ENCODE measurements at regions of chr1 and their contacts with region 1.

Region 1: GRCh38 chr1:23184212-23184934 is 15.7 kb upstream of the LUZP1 start:
- DNase-seq: no peak
- ATAC-seq: no peak
- H3K4me3 ChIP-seq: no peak overlapping the region
- H3K27ac ChIP-seq: peak overlapping the region; percentile 96 to 98; a peak in 5 of 6 replicates
- H3K4me1 ChIP-seq: peaks cover 24% of the 10 kb centered on the region
- CTCF ChIP-seq: peak; percentile 81
- EP300 ChIP-seq: no peak
- POLR2A ChIP-seq: no peak
- RAD21 ChIP-seq: peak; percentile 84 to 89

Region 2: GRCh38 chr1:22976461-22977243 is 207.7 kb before region 1 on chr1:
- CTCF ChIA-PET with region 1: interaction called, 26 read pairs
- POLR2A ChIA-PET with region 1: interaction called, 3 read pairs
- DNase-seq: peak; percentile 78 to 85
- ATAC-seq: peak; percentile 96 to 97
- H3K4me3 ChIP-seq: no peak overlapping the region
- H3K27ac ChIP-seq: peak overlapping the region; percentile 63 to 85
- H3K4me1 ChIP-seq: peaks cover 34% of the 10 kb centered on the region
- CTCF ChIP-seq: peak; percentile 91
- EP300 ChIP-seq: no peak
- POLR2A ChIP-seq: no peak
- RAD21 ChIP-seq: peak; percentile 87 to 94

Region 3: DNA sequence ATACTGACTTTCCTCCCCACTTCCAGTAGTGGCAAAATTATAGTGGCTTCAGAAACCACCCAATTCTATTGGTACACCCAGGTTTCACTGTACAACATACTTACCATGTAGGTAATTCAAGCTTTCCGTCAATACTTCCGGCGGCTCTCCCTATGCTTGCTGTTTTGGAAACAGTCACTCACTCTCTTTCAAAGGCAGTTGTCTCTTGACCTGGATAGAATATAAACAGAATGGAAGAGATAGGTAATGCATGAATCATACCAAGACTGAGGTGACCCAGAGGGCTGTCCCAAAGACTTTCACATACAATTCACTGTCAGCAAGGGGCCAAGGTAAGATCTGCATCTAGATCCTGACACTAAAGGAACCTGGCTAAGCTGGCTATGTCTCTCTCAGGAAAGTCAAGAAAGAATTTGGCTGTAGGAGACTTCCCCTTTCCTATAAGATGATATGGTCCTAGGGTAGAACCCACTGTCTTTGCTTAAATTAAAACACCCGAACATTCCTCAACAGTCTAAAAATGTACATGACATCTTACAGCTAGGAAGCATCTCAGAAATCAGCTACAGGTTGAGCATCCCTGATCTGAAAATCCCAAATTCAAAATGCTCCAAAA is 75.3 kb before region 1 on chr1:
- CTCF ChIA-PET with region 1: interaction called, 17 read pairs
- POLR2A ChIA-PET with region 1: no interaction called
- DNase-seq: no peak
- ATAC-seq: no peak
- H3K4me3 ChIP-seq: no peak overlapping the region
- H3K27ac ChIP-seq: 0 out of 6 replicates have a peak overlapping the region, but pooled peaks of 1 of the 2 experiments have one; percentile 16
- H3K4me1 ChIP-seq: peaks cover 49% of the 10 kb centered on the region
- CTCF ChIP-seq: no peak
- EP300 ChIP-seq: no peak
- POLR2A ChIP-seq: no peak
- RAD21 ChIP-seq: no peak

Region 4: GRCh38 chr1:23168457-23169194 is 15.7 kb before region 1 on chr1 and contains the start of gene LUZP1:
- CTCF ChIA-PET with region 1: interaction called, 86 read pairs
- POLR2A ChIA-PET with region 1: interaction called, 4 read pairs
- DNase-seq: peak in 1 of 2 experiments; percentile 84
- ATAC-seq: peak; percentile 81 to 83
- H3K4me3 ChIP-seq: peak within 1 kb of the TSS; percentile 95
- H3K27ac ChIP-seq: peak within 1 kb of the TSS; percentile 89 to 98
- H3K4me1 ChIP-seq: peaks cover 31% of the 10 kb centered on the region
- CTCF ChIP-seq: no peak
- EP300 ChIP-seq: no peak
- POLR2A ChIP-seq: peak; percentile 71
- RAD21 ChIP-seq: no peak
- polyA plus RNA-seq, gene LUZP1: 18.3 and 26.2 TPM in 2 replicates

Region 5: GRCh38 chr1:23202263-23202749 is 17.9 kb after region 1 on chr1:
- CTCF ChIA-PET with region 1: interaction called, 46 read pairs
- POLR2A ChIA-PET with region 1: no interaction called
- DNase-seq: no peak
- ATAC-seq: no peak; a peak in 1 of 6 replicates
- H3K4me3 ChIP-seq: no peak overlapping the region
- H3K27ac ChIP-seq: peak overlapping the region; percentile 97 to 98
- H3K4me1 ChIP-seq: peaks cover 39% of the 10 kb centered on the region
- CTCF ChIP-seq: no peak
- EP300 ChIP-seq: no peak
- POLR2A ChIP-seq: no peak
- RAD21 ChIP-seq: no peak

Measured in A549 (cell line).